Activated naive CD8-positive, alpha-beta T cell treated with anti-CD3 and anti-CD28 coated beads, Interleukin-2, amount 10 ng/mL, durations not matched to agents 7 days and 5 days (primary cell): ENCODE measurements at regions of chr5 and their contacts with region 1.

Region 1: GRCh38 chr5:143002459-143003328 is 232.5 kb downstream of the ARHGAP26 start:
- DNase-seq: peak; percentile 53
- ATAC-seq: peak; percentile 92
- H3K4me3 Mint-ChIP-seq: peak overlapping the region; percentile 71
- H3K27ac Mint-ChIP-seq: peak overlapping the region; percentile 98
- H3K4me1 Mint-ChIP-seq: peaks cover 71% of the 10 kb centered on the region
- H3K27me3 Mint-ChIP-seq: no peaks in the 10 kb centered on the region

Region 2: GRCh38 chr5:142770632-142771609 is 231.8 kb before region 1 on chr5:
- POLR2A ChIA-PET with region 1: no interaction called
- DNase-seq: peak; percentile 76
- ATAC-seq: peak; percentile 24
- H3K4me3 Mint-ChIP-seq: peak overlapping the region; percentile 86
- H3K27ac Mint-ChIP-seq: peak overlapping the region; percentile 88
- H3K4me1 Mint-ChIP-seq: peaks cover 34% of the 10 kb centered on the region
- H3K27me3 Mint-ChIP-seq: no peaks in the 10 kb centered on the region

Region 3: GRCh38 chr5:142977363-142978051 is 25.2 kb before region 1 on chr5:
- POLR2A ChIA-PET with region 1: interaction called, 13 read pairs
- DNase-seq: no peak
- ATAC-seq: peak; percentile 88
- H3K4me3 Mint-ChIP-seq: peak overlapping the region; percentile 70
- H3K27ac Mint-ChIP-seq: peak overlapping the region; percentile 88
- H3K4me1 Mint-ChIP-seq: peaks cover 51% of the 10 kb centered on the region
- H3K27me3 Mint-ChIP-seq: no peaks in the 10 kb centered on the region

Region 4: GRCh38 chr5:143037071-143037470 is 34.4 kb after region 1 on chr5:
- POLR2A ChIA-PET with region 1: no interaction called
- DNase-seq: no peak
- ATAC-seq: no peak
- H3K4me3 Mint-ChIP-seq: no peak overlapping the region
- H3K27ac Mint-ChIP-seq: no peak overlapping the region
- H3K4me1 Mint-ChIP-seq: peaks cover 20% of the 10 kb centered on the region
- H3K27me3 Mint-ChIP-seq: no peaks in the 10 kb centered on the region

Region 5: DNA sequence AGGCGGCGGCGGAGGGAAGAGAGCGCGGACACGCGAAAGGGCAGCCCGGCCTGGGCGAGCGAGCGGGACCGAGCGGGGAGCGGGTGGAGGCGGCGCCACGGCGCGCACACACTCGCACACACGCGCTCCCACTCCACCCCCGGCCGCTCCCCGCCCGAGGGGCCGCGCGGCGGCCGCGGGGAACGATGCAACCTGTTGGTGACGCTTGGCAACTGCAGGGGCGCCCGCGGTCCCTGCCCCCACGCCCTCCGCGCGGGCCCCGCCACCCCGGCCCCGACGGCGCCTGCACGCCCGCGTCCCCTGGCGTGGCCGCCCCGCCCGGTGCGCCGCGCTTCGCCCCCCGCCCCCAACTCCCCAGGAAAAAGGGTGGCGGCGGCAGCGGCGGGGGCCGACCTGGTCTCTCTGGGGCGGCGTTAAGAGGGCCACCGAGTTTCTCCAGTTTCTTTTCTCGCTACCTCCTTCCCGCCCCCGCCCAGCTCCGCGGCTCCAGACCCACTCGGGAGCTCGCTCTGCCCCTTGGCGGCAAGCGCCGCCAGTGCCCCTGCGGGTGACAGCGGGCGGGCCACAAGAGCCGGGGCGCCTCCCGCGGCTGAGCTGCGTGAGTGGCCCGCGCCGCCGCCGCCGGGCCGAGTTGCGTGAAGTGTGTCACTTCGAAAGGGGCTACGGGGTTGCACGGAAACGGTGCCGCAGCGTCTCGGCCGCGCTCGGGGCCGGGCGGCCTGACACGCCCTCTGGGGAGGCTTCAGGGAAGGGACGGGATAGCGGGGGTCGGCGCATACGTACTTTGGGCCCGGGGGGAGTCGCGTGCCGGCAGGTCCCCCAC is 401.1 kb after region 1 on chr5 and contains the start of gene NR3C1:
- POLR2A ChIA-PET with region 1: interaction called, 80 read pairs
- DNase-seq: peak; percentile 92
- ATAC-seq: peak; percentile 68
- H3K4me3 Mint-ChIP-seq: peak within 1 kb of the TSS; percentile 87
- H3K27ac Mint-ChIP-seq: peak within 1 kb of the TSS; percentile 96
- H3K4me1 Mint-ChIP-seq: peaks cover 46% of the 10 kb centered on the region
- H3K27me3 Mint-ChIP-seq: no peaks in the 10 kb centered on the region
- total RNA-seq, gene NR3C1: 95.5 to 102 TPM

Region 6: DNA sequence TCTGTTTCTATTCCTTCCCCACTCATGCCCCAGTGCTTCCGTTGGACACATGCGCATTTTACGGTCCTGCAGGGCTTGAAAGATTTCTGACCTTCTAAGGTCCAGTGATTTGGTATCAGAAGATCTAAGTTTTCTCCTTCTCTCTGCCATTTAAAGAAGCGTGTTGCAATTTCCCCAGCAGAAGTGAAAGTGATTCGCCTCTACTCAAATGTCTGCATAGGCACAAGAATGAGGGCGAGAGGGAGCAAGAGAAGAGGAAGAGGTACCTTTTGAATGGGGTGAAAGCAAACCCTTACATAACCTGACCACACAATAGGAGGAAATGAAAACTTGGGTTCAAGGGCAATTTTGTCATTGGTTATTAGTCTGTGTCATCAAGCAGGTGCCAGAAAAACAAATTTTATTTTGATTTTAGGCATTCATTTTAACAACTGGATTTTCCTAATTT is 432.5 kb after region 1 on chr5:
- POLR2A ChIA-PET with region 1: interaction called, 10 read pairs
- DNase-seq: no peak
- ATAC-seq: peak; percentile 77
- H3K4me3 Mint-ChIP-seq: peak overlapping the region; percentile 87
- H3K27ac Mint-ChIP-seq: peak overlapping the region; percentile 96
- H3K4me1 Mint-ChIP-seq: peaks cover 39% of the 10 kb centered on the region
- H3K27me3 Mint-ChIP-seq: no peaks in the 10 kb centered on the region